ENCODE measurements at regions of chr19 and their contacts with region 1.

Region 1: GRCh38 chr19:19203012-19203856 is at the start of gene NR2C2AP:
- DNase-seq: peak; percentile 88 to 95 (median 91)
- H3K4me3 ChIP-seq: peak within 1 kb of the TSS; percentile 40 to 90 (median 74)
- H3K27ac ChIP-seq: peak within 1 kb of the TSS; percentile 12 to 78
- H3K4me1 ChIP-seq: peaks cover 4 to 20% (median 15%) of the 10 kb centered on the region in 4 experiments
- H3K27me3 ChIP-seq: peaks cover 0 to 9% (median 0%) of the 10 kb centered on the region in 5 experiments

Region 2: GRCh38 chr19:19192078-19192882 is 11.0 kb before region 1 on chr19 and contains the starts of genes BORCS8 and RFXANK:
- CTCF ChIA-PET with region 1: interaction called, 19 read pairs
- POLR2A ChIA-PET with region 1: interaction called, 4 read pairs
- DNase-seq: peak; percentile 99
- H3K4me3 ChIP-seq: peak within 1 kb of the TSS; percentile 80 to 99 (median 98)
- H3K27ac ChIP-seq: peak within 1 kb of the TSS; percentile 97 to 99
- H3K4me1 ChIP-seq: peaks cover 9 to 31% (median 21%) of the 10 kb centered on the region in 4 experiments
- H3K27me3 ChIP-seq: no peaks in the 10 kb centered on the region

Measured in common myeloid progenitor, CD34-positive (primary cell).